A549 (cell line): ENCODE measurements at regions of chr7 and their contacts with region 1.

Region 1: DNA sequence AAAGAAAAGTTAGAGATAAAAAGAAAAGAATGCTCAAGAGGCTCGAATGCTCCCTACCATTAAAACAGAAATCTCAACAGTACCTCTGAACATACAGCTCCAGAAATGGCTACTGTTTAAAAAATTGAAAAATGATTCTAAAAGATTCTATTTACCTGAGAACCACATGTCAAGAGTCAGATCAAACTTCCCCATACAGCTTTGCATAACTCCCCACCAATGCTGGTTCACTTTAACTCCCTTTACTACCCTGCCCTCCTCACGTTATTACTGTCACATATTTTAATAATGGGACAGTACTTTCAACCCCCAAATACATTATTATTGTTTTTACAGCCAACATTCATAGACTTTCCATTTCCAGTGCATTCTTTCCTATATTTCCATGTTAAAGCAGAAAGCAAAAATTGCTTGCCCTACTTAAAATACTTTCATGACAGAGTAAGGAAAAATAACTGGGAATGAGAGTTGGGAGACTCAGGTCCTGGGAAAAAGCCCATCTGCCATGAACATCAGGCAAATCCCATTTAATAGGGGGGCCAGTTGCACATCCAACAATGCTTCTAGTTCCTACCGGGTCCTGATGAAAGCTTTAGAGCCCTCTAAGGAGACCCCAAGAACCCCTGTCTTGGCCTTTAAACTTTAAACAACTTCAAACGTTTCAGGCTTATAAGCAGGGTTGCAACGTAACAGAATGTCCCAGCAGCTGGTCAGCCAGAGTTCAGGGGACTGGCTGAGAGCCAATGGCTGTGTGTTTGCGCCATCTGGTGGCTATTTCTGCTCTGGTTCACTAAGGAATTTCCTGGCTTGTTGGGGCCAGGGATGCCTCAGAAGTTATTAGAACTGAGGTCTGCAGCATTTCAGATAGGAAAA is 247.4 kb downstream of the ELMO1 start:
- DNase-seq: peak; percentile 70 to 84
- ATAC-seq: peak; percentile 85 to 92
- H3K4me3 ChIP-seq: no peak overlapping the region
- H3K27ac ChIP-seq: peak overlapping the region in 1 of 2 experiments; percentile 31; a peak in 1 of 6 replicates
- H3K4me1 ChIP-seq: peaks cover 5% of the 10 kb centered on the region; the same call in 1 of the 3 replicates
- CTCF ChIP-seq: peak; percentile 84
- EP300 ChIP-seq: no peak
- POLR2A ChIP-seq: no peak
- RAD21 ChIP-seq: peak; percentile 76 to 79

Region 2: DNA sequence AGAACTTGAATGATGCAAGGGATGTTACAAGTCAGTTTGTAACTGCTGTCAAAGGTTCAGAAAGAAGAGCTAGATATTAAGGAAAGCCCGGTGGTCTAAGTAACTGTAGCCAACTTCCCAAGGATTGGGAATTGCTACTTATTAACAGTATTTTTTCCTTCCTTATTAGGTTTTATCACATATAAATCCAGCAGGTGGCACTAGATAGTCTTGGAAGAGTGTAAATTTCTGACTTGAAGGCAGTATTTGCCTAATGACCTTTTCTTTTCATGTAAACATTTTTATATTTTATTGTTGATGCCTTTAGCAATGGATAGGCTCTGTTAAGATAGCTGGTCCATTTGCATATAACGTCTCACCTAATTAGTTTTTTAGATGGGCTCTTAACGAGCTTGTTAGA is 760.4 kb before region 1 on chr7:
- CTCF ChIA-PET with region 1: interaction called, 108 read pairs
- POLR2A ChIA-PET with region 1: no interaction called
- DNase-seq: peak; percentile 37 to 41
- ATAC-seq: peak; percentile 76 to 81; a peak in 4 of 6 replicates
- H3K4me3 ChIP-seq: no peak overlapping the region
- H3K27ac ChIP-seq: no peak overlapping the region
- H3K4me1 ChIP-seq: no peaks in the 10 kb centered on the region
- CTCF ChIP-seq: peak; percentile 74
- EP300 ChIP-seq: no peak
- POLR2A ChIP-seq: no peak
- RAD21 ChIP-seq: peak; percentile 42 to 65; a peak in 4 of 5 replicates

Region 3: GRCh38 chr7:36473454-36474282 is 727.6 kb before region 1 on chr7:
- CTCF ChIA-PET with region 1: interaction called, 28 read pairs
- POLR2A ChIA-PET with region 1: no interaction called
- DNase-seq: peak; percentile 28 to 38
- ATAC-seq: peak; percentile 85 to 91
- H3K4me3 ChIP-seq: no peak overlapping the region
- H3K27ac ChIP-seq: no peak overlapping the region
- H3K4me1 ChIP-seq: peaks cover 7% of the 10 kb centered on the region; the same call in 1 of the 3 replicates
- CTCF ChIP-seq: peak; percentile 63
- EP300 ChIP-seq: no peak
- POLR2A ChIP-seq: no peak
- RAD21 ChIP-seq: peak; percentile 80 to 93

Region 4: DNA sequence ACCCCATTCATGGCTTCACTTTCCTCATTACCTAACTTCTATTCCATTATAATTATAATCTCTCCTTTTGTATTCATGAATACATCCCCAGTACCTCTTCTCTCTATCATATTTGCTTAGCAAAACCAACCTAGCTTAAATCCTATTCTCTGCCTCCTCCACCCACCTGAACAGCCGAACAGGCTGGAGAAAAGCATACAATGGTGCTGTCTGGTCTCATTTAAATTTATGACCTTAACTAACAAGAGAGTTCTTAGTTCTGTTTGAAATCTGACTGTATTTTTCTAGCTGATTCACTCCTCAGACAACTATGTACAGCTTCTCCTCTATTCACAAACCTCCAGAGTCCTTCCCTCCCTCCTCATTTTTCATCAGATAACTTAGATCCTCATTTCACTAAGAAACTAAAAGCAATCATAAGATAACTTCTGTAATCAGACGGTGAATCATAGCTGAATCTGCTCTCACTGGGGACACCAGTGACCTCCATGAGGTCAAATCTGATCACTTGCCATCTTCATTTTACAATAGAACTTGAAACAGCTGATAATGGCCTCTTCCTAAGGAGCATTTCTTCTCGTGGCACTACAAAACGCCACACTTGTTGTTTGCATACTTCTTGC is 243.0 kb before region 1 on chr7:
- CTCF ChIA-PET with region 1: interaction called, 12 read pairs
- POLR2A ChIA-PET with region 1: no interaction called
- DNase-seq: no peak
- ATAC-seq: no peak
- H3K4me3 ChIP-seq: no peak overlapping the region
- H3K27ac ChIP-seq: no peak overlapping the region
- H3K4me1 ChIP-seq: no peaks in the 10 kb centered on the region; the same call in 2 of the 3 replicates
- CTCF ChIP-seq: no peak
- EP300 ChIP-seq: no peak
- POLR2A ChIP-seq: no peak
- RAD21 ChIP-seq: no peak

Region 5: DNA sequence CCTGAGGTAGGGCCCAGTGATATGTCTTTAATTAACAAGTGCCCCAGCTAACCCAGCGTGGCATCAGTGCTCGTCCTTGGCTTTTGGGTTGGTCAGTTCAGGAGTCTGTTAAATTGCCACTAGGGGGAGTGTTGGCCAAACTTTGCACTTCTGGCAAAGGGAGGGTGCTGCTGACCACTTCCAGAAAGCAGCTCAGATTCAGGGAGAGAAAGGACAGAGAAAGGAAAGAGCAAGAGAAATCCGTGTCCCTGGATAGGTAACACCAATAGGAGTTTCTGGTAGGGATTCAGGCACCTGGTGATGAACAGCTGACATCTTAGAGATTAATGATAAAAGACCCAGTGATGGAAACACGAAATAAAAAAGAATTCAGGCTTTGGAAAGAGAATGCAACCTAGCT is 233.9 kb before region 1 on chr7:
- CTCF ChIA-PET with region 1: interaction called, 20 read pairs
- POLR2A ChIA-PET with region 1: no interaction called
- DNase-seq: peak; percentile 49 to 69
- ATAC-seq: peak; percentile 94 to 100
- H3K4me3 ChIP-seq: no peak overlapping the region
- H3K27ac ChIP-seq: no peak overlapping the region
- H3K4me1 ChIP-seq: peaks cover 10% of the 10 kb centered on the region
- CTCF ChIP-seq: peak; percentile 72
- EP300 ChIP-seq: no peak
- POLR2A ChIP-seq: no peak
- RAD21 ChIP-seq: peak; percentile 72 to 88

Region 6: DNA sequence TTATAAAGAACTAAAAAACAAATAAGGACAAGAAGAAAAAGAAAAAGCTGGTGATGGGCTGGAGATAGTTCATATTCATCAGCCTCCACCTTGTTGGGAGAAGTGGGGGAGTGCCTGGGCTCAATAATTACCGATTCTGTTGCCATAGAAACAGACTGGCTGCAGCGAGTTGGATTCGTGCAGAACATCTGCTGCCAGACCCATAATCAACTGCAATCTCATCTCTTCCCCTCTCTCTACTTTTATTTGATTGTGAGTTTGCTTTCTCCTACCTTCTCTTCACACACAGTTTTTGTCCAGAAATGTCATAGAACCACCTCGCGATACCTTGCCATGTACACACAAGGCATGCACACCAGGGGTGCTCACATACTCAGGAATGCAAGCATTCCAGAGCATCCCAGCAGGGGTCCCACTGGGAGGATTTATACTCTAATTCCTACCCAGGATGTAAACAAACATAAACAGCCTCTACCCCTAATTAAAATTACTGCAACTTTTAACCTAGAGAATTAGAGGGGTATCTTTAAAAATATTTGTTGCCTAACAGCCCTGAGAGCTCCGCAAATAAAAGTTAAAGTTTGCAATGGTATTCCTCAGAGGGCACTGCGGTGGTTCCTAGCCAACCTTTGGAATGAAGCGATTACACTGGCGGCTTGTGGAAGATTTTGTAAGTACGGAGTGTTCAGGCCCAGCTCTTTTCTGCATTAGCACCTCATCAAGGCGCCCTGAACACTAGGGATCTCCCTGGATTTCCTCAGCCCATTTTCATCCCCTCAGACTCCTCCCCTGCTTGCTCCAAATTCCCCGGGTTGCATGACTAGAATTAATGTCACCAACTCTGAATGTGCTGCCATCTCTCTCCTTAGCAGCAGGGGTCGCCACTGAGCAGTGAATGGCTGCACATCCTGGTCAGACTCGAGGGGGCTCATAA is 214.5 kb before region 1 on chr7:
- CTCF ChIA-PET with region 1: interaction called, 54 read pairs
- POLR2A ChIA-PET with region 1: no interaction called
- DNase-seq: peak; percentile 57 to 75
- ATAC-seq: peak; percentile 78 to 90
- H3K4me3 ChIP-seq: no peak overlapping the region
- H3K27ac ChIP-seq: no peak overlapping the region
- H3K4me1 ChIP-seq: no peaks in the 10 kb centered on the region
- CTCF ChIP-seq: peak; percentile 68
- EP300 ChIP-seq: no peak
- POLR2A ChIP-seq: no peak
- RAD21 ChIP-seq: peak; percentile 72 to 82

Region 7: GRCh38 chr7:37083311-37084096 is 117.7 kb before region 1 on chr7:
- CTCF ChIA-PET with region 1: no interaction called
- POLR2A ChIA-PET with region 1: no interaction called
- DNase-seq: no peak
- ATAC-seq: no peak
- H3K4me3 ChIP-seq: no peak overlapping the region
- H3K27ac ChIP-seq: 0 out of 6 replicates have a peak overlapping the region, but pooled peaks of 1 of the 2 experiments have one; percentile 16
- H3K4me1 ChIP-seq: peaks cover 12% of the 10 kb centered on the region; the same call in 1 of the 3 replicates
- CTCF ChIP-seq: no peak
- EP300 ChIP-seq: no peak
- POLR2A ChIP-seq: no peak
- RAD21 ChIP-seq: no peak

Region 8: DNA sequence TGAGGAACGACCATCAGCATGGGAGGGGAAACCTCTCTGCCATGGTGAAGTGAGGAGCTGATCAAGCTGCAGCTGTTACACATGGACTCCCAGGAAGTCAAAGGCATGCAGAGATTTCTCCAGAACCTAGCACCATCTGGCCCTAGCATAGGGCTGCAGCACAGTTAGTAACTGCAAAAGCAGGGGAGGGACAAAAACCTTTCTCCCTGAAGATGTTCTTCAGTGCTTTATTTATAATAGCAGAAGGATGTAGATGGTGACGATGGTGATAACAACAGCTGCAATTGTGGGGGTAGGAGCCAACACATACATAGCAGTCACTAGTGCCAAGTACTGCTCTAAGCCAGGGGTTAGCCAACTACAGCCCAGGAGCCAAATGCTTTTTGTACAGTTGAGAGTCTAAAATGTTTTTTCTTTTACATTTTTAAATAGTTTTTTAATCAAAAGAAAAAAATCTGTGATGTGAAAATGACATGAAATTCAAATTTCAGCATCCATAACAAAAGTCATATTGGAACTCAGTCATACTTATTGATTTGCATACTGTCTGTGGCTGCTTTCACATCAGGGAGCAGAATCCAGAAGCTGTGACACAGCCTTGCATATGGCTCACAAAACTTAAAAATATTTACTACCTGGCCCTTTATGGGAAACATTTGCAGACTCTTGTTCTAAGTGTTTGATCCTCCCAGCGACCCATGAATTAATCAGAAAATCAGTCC is 52.0 kb before region 1 on chr7:
- CTCF ChIA-PET with region 1: no interaction called
- POLR2A ChIA-PET with region 1: no interaction called
- DNase-seq: no peak
- ATAC-seq: no peak
- H3K4me3 ChIP-seq: no peak overlapping the region
- H3K27ac ChIP-seq: no peak overlapping the region
- H3K4me1 ChIP-seq: no peaks in the 10 kb centered on the region
- CTCF ChIP-seq: no peak
- EP300 ChIP-seq: no peak
- POLR2A ChIP-seq: no peak
- RAD21 ChIP-seq: no peak

Region 9: GRCh38 chr7:37211097-37211880 is 10.1 kb after region 1 on chr7:
- CTCF ChIA-PET with region 1: interaction called, 41 read pairs
- POLR2A ChIA-PET with region 1: no interaction called
- DNase-seq: no peak
- ATAC-seq: no peak
- H3K4me3 ChIP-seq: no peak overlapping the region
- H3K27ac ChIP-seq: no peak overlapping the region
- H3K4me1 ChIP-seq: no peaks in the 10 kb centered on the region; the same call in 2 of the 3 replicates
- CTCF ChIP-seq: no peak
- EP300 ChIP-seq: no peak
- POLR2A ChIP-seq: no peak
- RAD21 ChIP-seq: no peak